Heart right ventricle (tissue), 16 donors: ENCODE measurements at regions of chr5 and their contacts with region 1.

Region 1: GRCh38 chr5:36919650-36920049 is 43.1 kb downstream of the NIPBL start:
- DNase-seq: no peak
- ATAC-seq: no peak
- H3K4me3 ChIP-seq: no peak overlapping the region
- H3K27ac ChIP-seq: peak overlapping the region in 1 of 10 donors; percentile 12
- H3K4me1 ChIP-seq: peaks cover 0 to 63% (median 36%) of the 10 kb centered on the region in 9 donors
- H3K27me3 ChIP-seq: no peaks in the 10 kb centered on the region
- CTCF ChIP-seq: no peak

Region 2: DNA sequence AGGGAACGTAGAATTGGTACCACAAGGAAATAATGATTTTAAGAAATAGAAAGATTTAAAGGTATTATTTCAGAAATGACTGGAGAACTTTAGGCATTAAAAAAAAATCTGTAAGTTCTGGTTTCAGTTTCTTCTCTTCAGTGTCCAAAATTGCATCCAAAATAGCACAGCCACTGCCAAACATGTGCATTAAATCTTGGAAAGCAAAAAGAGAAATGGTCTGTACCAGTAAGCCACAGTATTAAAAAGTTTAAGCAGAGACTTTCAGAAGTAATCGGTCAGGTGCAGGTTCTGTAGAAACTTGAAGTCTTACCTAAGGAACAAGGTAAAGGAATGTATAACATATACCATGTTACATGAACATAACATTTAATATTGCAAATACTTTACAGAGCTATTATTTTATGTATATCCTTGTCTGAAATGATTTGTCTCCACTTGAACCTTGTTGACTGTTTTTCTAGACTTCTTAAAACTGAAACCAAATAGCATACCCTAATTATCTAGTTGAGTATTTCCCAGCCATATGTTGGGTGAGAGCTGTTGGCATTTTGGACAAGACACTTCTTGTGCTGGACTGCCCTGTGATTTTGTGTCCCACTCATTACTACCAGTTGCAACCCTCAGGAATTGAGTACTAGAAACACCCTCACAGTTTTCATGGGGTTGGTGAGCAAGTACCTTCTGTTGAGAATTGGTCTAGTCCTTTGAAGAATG is 10.9 kb before region 1 on chr5:
- intact Hi-C with region 1: loop called in 1 of 10 experiments (anchors 2 kb)
- DNase-seq: no peak
- ATAC-seq: no peak
- H3K4me3 ChIP-seq: no peak overlapping the region
- H3K27ac ChIP-seq: no peak overlapping the region
- H3K4me1 ChIP-seq: peaks cover 0 to 59% (median 39%) of the 10 kb centered on the region in 9 donors
- H3K27me3 ChIP-seq: no peaks in the 10 kb centered on the region
- CTCF ChIP-seq: no peak